ENCODE measurements at regions of chr11 and their contacts with region 1.

Region 1: DNA sequence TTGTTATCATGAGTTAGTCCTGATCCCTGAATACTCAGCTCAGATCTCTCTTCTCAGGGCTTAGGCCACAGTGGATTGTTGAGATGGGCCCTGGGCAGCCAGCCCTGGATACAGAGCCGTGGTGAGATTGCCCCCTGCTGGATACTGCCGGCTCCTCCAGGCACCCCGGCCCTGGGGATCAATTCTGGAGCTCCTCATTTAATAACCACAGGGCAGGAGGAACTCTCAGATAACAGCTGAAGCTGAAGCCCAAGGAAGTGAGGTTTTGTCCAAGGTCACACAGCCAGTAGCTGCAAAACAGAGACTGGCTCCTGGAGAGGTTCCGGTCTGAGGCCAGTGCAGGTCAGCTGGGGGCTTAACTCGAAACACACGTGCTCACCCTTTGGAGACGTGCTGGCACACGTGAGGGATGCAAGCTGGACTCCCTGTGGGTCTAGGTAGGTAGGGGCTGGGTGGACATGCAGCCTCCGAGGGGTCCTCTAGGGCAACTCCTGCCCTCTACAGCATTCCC is 16.0 kb downstream of the USH1C start:
- DNase-seq: peak in 1 of 2 experiments; percentile 90
- H3K4me3 ChIP-seq: no peak overlapping the region
- H3K27ac ChIP-seq: 0 out of 2 replicates have a peak overlapping the region, but pooled peaks have one; percentile 27
- H3K4me1 ChIP-seq: peaks cover 0 to 3% (median 0%) of the 10 kb centered on the region in 4 experiments; a peak in 3 of 7 replicates
- H3K27me3 ChIP-seq: no peaks in the 10 kb centered on the region
- CTCF ChIP-seq: peak; percentile 80 to 93 (median 83)
- EP300 ChIP-seq: no peak
- POLR2A ChIP-seq: no peak
- RAD21 ChIP-seq: peak; percentile 85 to 91

Region 2: DNA sequence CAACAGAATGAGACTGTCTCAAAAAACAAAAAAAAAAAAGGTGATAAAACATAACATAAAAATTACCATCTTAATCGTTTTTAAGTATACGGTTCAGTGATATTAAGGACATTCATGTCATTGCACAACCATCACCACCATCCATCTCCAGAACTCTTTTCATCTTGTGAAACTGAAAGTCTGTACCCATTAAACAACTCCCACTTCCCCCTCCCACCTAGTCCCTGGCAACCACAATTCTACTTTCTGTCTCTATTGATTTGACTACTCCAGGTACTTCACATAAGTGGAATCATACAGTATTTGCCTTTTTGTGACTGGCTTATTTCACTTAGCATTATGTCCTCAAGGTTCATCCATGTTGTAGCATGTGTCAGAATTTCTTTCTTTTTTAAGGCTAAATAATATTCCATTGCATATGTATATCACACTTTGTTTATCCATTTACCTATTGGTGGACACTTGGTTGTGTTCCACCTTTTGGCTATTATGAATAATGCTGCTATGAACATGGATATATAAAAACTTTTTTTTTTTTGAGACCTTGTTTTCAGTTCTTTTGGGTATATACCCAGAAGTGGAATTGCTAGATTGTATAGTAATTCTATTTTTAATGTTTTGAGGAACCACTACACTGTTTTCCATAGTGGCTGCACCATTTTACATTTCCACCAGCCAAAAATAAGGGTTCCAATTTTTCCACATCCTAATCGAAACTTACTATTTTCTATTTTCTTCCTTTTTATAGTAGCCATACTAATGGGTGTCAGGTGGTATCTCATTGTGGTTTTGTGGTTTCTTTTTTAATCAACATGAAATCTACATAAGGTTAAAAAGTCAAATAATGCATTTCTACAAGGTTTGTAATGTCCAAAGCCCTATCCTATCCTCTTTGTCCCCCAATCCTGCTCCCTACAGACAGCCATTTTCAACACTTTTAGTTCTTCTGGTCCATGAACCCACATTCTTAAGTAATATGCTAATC is 297.1 kb before region 1 on chr11:
- CTCF ChIA-PET with region 1: interaction called, 20 read pairs
- POLR2A ChIA-PET with region 1: no interaction called
- DNase-seq: no peak
- H3K4me3 ChIP-seq: no peak overlapping the region
- H3K27ac ChIP-seq: no peak overlapping the region
- H3K4me1 ChIP-seq: no peaks in the 10 kb centered on the region
- H3K27me3 ChIP-seq: no peaks in the 10 kb centered on the region
- CTCF ChIP-seq: no peak
- EP300 ChIP-seq: no peak
- POLR2A ChIP-seq: no peak
- RAD21 ChIP-seq: no peak

Region 3: DNA sequence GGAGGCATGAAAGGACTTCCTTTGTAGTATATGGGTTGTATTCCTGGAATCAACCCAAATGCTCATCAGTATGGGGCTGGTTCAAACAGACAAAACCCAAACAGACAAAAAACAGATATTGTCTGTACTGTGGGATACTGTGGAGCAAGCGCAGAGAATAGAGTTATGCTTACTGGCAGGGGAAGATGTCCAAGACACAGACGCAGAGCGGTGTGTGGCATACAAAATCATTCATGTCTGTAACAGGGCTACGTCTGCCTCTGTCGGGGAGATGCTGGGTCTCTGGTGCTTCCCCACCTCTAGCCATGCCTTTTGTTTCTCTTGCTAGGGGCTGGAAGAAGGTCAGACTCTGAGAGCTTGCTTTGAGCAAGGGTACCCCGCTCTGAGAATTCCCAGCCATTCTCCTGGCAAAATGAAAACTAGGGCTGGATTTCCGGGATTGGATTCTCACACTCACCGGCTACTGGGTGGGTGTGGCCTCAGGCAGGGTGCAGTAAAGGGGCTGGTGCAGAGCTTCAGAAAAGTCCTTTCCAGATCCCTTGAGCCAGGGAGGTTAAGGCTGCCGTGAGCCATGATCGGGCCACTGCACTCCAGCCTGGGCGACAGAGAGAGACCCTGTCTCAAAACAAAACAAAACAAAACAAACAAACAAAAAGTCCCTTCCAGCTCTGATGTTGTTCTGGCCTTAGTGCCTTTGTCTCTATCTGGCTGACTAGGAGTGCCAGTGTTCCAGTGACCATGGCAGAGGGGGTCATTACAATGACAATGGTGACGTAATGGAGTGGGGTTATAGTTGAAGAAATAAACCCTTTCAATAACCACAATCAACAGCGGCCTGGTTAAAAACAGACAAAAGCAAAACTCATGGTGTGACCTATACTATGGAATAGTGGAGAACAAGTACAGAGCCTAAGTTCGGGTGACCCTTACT is 48.7 kb before region 1 on chr11:
- CTCF ChIA-PET with region 1: interaction called, 11 read pairs
- POLR2A ChIA-PET with region 1: no interaction called
- DNase-seq: peak; percentile 25 to 93
- H3K4me3 ChIP-seq: no peak overlapping the region
- H3K27ac ChIP-seq: no peak overlapping the region
- H3K4me1 ChIP-seq: peaks cover 4 to 8% (median 6%) of the 10 kb centered on the region in 4 experiments; a peak in 6 of 7 replicates
- H3K27me3 ChIP-seq: peaks cover 26 to 47% (median 41%) of the 10 kb centered on the region in 4 experiments
- CTCF ChIP-seq: no peak
- EP300 ChIP-seq: no peak
- POLR2A ChIP-seq: no peak
- RAD21 ChIP-seq: peak in 1 of 2 experiments; percentile 23; a peak in 1 of 4 replicates

Region 4: GRCh38 chr11:17498475-17498874 is 29.8 kb before region 1 on chr11:
- CTCF ChIA-PET with region 1: interaction called, 494 read pairs
- POLR2A ChIA-PET with region 1: no interaction called
- DNase-seq: peak in 1 of 2 experiments; percentile 52
- H3K4me3 ChIP-seq: no peak overlapping the region
- H3K27ac ChIP-seq: no peak overlapping the region
- H3K4me1 ChIP-seq: peaks cover 0 to 6% (median 2%) of the 10 kb centered on the region in 4 experiments; a peak in 3 of 7 replicates
- H3K27me3 ChIP-seq: no peaks in the 10 kb centered on the region; a peak in 2 of 7 replicates
- CTCF ChIP-seq: peak; percentile 48 to 61 (median 57); a peak in 3 of 4 replicates
- EP300 ChIP-seq: no peak
- POLR2A ChIP-seq: no peak
- RAD21 ChIP-seq: peak in 1 of 2 experiments; percentile 23; a peak in 1 of 4 replicates

Region 5: DNA sequence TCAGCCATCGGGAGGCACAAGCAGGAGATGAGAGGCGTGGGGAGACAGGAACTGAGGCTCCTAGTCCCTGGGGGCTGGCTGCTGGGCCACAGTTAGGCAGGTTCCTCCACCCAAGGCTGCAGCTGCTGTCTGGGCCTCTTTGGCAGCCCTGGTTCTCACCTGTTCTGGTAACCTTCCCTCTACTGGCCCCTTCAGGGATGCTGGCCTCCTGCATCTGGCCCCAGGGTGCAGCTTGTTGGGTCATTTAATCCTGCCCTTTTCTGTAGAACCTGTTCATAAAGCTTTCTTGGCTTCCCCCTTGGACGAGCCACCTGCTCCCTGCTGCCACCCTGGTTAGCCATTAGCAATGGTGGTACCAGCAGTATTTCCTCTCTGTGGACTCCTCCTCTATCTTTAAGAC is 10.5 kb after region 1 on chr11:
- CTCF ChIA-PET with region 1: interaction called, 25 read pairs
- POLR2A ChIA-PET with region 1: interaction called, 3 read pairs
- DNase-seq: no peak
- H3K4me3 ChIP-seq: no peak overlapping the region
- H3K27ac ChIP-seq: no peak overlapping the region
- H3K4me1 ChIP-seq: peaks cover 0 to 7% (median 4%) of the 10 kb centered on the region in 4 experiments; a peak in 5 of 7 replicates
- H3K27me3 ChIP-seq: peaks cover 0 to 11% (median 5%) of the 10 kb centered on the region in 4 experiments; a peak in 4 of 7 replicates
- CTCF ChIP-seq: peak in 1 of 3 experiments; percentile 20; a peak in 2 of 4 replicates
- EP300 ChIP-seq: no peak
- POLR2A ChIP-seq: no peak
- RAD21 ChIP-seq: peak in 1 of 2 experiments; percentile 24; a peak in 1 of 4 replicates

Region 6: GRCh38 chr11:17552392-17553248 is 24.4 kb after region 1 on chr11:
- CTCF ChIA-PET with region 1: interaction called, 15 read pairs
- POLR2A ChIA-PET with region 1: no interaction called
- DNase-seq: no peak
- H3K4me3 ChIP-seq: no peak overlapping the region
- H3K27ac ChIP-seq: no peak overlapping the region
- H3K4me1 ChIP-seq: peaks cover 0 to 8% (median 4%) of the 10 kb centered on the region in 4 experiments; a peak in 4 of 7 replicates
- H3K27me3 ChIP-seq: peaks cover 0 to 4% (median under 1%) of the 10 kb centered on the region in 4 experiments; a peak in 2 of 7 replicates
- CTCF ChIP-seq: no peak
- EP300 ChIP-seq: no peak
- POLR2A ChIP-seq: no peak
- RAD21 ChIP-seq: no peak

Region 7: GRCh38 chr11:17588166-17588565 is 59.9 kb after region 1 on chr11:
- CTCF ChIA-PET with region 1: no interaction called
- POLR2A ChIA-PET with region 1: no interaction called
- DNase-seq: no peak
- H3K4me3 ChIP-seq: no peak overlapping the region
- H3K27ac ChIP-seq: no peak overlapping the region
- H3K4me1 ChIP-seq: no peaks in the 10 kb centered on the region
- H3K27me3 ChIP-seq: no peaks in the 10 kb centered on the region
- CTCF ChIP-seq: no peak
- EP300 ChIP-seq: no peak
- POLR2A ChIP-seq: no peak
- RAD21 ChIP-seq: no peak

Region 8: DNA sequence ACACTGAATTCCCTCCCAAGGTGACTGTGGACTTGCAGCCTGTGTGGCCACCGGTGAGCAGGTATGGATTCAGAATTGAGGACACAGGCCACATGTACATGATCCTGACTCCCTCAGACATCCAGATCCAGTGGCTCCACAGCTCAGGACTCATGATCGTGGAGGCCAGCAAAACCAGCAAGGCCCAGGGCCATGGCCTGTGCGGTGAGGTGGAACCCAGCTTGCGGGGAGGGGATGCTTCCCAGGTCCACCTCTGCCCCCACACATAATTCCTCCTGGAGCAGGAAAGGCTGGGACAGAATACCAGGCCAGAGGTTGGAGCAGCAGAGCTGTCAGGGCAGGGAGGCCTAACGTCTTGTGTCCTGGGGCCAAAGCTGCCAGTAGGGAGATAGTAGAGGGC is 100.9 kb after region 1 on chr11:
- CTCF ChIA-PET with region 1: no interaction called
- POLR2A ChIA-PET with region 1: no interaction called
- DNase-seq: no peak
- H3K4me3 ChIP-seq: no peak overlapping the region
- H3K27ac ChIP-seq: no peak overlapping the region
- H3K4me1 ChIP-seq: no peaks in the 10 kb centered on the region
- H3K27me3 ChIP-seq: no peaks in the 10 kb centered on the region
- CTCF ChIP-seq: no peak
- EP300 ChIP-seq: no peak
- POLR2A ChIP-seq: no peak
- RAD21 ChIP-seq: no peak

Measured in H1 (cell line).